Cardiac septum (tissue), 1 donor: ENCODE measurements at regions of chr1 and their contacts with region 1.

Region 1: DNA sequence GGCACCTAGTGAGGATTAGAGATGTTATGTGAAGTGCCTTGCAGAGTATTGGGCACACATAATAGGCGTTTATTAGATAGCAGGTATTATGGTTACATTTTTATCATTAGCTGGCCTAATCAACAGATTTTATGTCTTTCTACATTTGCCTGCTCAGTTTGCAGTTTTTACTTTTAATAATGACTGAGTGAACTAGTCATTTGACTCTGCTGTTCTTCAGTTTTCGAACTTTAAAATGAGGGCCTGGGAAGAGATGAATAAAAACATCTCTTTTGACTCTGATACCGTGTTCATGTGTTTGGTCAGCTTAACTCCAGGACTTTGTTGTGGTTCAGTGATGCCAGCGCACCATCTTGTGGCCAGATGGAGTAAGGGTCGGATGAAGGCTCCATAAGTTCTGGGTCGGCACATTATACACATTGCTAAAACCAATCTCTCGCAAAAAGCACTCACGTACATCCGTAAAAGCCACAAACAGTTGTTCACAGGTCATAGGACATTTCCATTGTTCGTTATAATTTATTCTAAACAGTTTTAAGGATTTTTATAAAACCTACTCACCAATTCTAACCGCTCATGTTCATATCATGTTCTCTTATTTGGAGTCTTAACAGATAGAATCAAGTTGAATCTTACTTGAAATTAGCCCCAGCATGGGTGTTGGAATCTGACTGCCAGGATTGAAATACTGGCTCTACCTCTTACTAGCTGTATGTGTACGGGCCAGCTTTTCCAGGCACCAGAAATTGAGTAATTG is 78.4 kb upstream of the GPR88 start:
- DNase-seq: no peak

Region 2: DNA sequence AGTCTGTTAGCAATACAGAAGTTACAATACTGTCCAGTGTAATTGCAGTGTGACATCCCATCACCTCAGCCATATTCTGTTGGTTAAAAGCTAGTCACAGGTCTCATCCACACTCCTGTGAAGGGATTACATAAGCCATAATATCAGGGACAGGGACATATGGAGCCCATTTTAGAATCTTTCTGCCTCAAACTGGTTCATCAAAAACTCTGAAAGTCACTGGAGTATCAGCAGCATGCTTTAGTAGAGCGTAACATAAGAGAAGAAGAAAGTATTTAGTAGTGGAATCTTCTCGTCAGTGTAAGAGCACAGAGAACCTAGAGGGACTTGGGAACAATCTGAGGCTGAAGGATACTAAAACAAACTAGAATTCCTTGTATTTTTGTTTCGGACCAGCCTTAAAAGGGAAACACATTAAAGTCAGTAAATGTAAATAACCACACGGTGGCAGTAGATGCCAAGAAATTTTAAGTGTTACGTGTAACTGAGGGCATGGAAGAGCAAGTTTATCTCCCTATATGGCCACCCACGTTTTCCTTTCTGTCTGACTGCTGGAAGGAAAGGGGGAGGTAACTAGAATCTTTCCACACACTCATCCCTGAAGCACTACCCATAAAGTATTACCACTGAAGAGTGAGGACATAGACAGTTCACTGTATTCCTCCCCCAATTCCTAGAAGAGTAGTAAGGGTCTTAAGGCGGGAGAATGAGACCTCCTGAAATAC is 651.0 kb before region 1 on chr1:
- intact Hi-C with region 1: loop called (anchors 2 kb)
- DNase-seq: no peak

Region 3: DNA sequence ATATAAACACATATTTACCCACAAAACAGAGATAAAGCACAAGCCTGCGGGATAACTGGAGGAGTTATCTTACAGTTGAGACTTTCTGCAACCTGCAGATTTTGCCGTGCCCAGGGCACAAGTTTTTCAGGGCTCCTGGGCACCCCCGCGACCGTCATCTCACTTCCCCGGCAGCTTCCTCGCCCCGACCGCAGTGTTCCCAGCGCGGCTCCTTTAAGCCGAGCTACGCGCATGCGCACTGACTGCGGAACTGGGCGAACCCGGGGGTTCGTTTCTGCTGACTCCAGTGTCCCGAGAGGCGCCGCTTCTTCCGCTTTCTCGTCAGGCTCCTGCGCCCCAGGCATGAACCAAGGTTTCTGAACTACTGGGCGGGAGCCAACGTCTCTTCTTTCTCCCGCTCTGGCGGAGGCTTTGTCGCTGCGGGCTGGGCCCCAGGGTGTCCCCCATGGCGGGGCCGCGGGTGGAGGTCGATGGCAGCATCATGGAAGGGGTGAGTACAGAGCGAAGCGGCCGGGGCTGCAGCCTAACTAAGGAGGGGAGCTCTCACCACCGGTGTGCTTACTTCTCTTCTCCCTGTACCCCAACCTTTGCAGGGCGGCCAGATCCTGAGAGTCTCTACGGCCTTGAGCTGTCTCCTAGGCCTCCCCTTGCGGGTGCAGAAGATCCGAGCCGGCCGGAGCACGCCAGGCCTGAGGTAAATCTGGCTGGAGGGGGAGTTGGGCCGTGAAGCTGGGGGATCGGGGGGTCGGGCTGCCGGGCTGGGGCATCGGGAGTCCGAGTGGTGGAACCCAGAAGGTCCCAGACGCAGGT is 193.4 kb before region 1 on chr1 and contains the start of gene RTCA:
- intact Hi-C with region 1: loop called (anchors 10 kb)
- DNase-seq: peak; percentile 99
- total RNA-seq, gene RTCA: 34.4 TPM

Region 4: DNA sequence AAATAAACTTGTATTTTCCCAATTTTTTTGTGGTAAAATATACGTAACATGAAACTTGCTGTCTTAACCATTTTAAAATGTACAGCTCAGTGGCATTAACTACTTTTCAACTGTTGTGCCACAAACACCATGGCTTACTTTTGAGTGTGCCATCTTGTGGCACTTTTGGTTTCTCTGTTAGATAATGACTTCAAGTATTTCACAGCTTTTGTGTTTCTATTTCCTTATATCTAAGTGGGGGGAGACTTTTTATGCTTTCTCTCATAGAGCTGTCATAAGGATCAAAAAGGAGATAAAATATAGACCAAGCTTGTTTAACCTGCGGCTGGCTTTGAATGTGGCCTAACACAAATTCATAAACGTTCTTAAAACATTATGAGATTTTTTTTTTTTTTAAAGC is 62.9 kb before region 1 on chr1:
- intact Hi-C with region 1: no loop called
- DNase-seq: no peak

Region 5: DNA sequence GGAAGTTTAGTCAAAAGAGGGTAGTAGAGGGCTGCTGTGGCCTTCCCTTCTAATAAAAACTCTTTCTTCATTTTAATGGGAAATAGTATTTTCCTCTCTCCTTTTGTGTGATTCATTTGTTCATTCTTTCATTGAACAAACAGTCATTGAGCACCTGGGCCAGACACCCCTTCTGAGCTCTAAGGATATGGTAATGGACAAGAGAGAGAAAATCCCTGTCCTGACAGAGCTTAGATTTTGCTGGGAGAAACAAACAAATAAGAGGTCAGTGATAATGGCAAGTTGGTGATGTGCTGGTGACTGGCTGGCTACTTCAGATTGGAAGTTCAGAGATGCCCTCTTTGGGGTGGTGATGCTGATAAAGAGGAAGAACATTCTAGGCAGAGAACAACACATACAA is 48.0 kb before region 1 on chr1:
- intact Hi-C with region 1: no loop called
- DNase-seq: no peak

Region 6: DNA sequence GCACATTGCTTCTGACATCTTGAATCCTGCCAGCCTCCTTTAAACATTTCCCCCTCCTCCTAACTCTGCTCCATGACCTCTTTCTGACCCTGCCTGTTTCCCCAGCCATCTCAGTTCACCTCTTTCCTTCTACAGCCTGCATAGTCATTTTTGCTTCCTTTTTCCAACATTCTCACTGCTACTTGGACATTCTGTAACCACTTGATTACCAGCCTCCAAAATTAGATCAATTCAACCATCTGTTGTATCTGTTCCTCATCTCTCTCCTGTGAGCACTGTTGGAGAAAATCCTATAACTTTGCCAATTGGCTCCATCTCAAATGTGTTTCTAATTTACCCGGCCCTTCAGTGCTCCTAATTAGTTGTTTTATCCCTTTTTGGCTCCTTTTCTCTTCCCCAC is 50.9 kb after region 1 on chr1:
- intact Hi-C with region 1: no loop called
- DNase-seq: no peak

Region 7: GRCh38 chr1:100606438-100606837 is 146.9 kb after region 1 on chr1:
- intact Hi-C with region 1: loop called (anchors 10 kb)
- DNase-seq: no peak